ENCODE measurements at regions of chr13 and their contacts with region 1.

Region 1: DNA sequence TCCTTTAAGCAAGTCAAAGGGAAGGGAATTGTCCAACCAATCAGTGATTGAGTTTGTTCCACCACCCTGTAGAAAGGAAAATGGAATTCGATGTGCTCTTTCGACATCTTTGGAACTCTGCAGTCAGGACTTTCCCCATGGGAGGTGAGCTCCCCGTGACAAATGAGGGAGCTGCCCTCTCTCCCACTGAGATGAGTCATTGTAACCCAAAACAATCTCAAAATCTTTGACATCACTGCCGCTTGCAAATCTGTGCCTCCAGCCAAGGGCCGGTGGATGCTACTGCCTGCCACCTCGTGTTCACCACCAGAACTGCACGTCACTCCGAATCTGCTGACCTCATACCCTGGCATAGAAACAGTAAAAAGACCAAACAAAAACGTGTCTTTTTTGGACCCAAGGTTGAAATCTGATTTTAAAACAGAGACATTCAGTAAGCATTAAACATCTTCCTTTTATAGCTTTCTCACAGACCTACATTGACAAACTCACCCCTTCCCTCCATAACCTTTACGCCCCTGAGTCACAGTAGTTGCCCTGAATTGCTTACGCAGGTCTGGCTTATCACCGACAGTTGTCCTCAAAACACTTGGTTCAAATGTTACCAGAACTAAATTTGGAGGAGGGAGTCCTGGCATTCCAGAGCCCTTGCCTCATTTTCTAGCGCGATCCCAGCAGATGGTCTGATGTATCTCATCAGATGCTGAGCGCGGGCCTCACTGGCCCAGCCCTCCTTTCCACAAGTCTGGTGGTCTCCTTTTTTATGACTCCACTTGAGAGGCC is 105.2 kb downstream of the COL4A2 start:
- DNase-seq: peak; percentile 91 to 93
- ATAC-seq: peak; percentile 90
- H3K4me3 ChIP-seq: no peak overlapping the region
- H3K27ac ChIP-seq: peak overlapping the region; percentile 40 to 92
- H3K4me1 ChIP-seq: peaks cover 4 to 13% of the 10 kb centered on the region in 2 donors
- H3K27me3 ChIP-seq: no peaks in the 10 kb centered on the region

Region 2: GRCh38 chr13:110244071-110244830 is 168.1 kb before region 1 on chr13:
- intact Hi-C with region 1: loop called (anchors 5 to 10 kb)
- DNase-seq: no peak
- ATAC-seq: peak; percentile 34
- H3K4me3 ChIP-seq: no peak overlapping the region
- H3K27ac ChIP-seq: peak overlapping the region; percentile 38 to 98
- H3K4me1 ChIP-seq: peaks cover 3 to 14% of the 10 kb centered on the region in 2 donors
- H3K27me3 ChIP-seq: no peaks in the 10 kb centered on the region

Region 3: GRCh38 chr13:110306960-110307746 is 105.2 kb before region 1 on chr13 and contains the starts of genes COL4A1 and COL4A2:
- intact Hi-C with region 1: loop called (anchors 2 to 10 kb)
- DNase-seq: peak; percentile 80 to 94
- ATAC-seq: peak; percentile 85
- H3K4me3 ChIP-seq: peak within 1 kb of the TSS; percentile 55 to 89
- H3K27ac ChIP-seq: peak within 1 kb of the TSS; percentile 80 to 91
- H3K4me1 ChIP-seq: peaks cover 6 to 11% of the 10 kb centered on the region in 2 donors
- H3K27me3 ChIP-seq: no peaks in the 10 kb centered on the region
- total RNA-seq, gene COL4A1: 564 to 910 TPM
- total RNA-seq, gene COL4A2: 693 to 1,110 TPM

Region 4: DNA sequence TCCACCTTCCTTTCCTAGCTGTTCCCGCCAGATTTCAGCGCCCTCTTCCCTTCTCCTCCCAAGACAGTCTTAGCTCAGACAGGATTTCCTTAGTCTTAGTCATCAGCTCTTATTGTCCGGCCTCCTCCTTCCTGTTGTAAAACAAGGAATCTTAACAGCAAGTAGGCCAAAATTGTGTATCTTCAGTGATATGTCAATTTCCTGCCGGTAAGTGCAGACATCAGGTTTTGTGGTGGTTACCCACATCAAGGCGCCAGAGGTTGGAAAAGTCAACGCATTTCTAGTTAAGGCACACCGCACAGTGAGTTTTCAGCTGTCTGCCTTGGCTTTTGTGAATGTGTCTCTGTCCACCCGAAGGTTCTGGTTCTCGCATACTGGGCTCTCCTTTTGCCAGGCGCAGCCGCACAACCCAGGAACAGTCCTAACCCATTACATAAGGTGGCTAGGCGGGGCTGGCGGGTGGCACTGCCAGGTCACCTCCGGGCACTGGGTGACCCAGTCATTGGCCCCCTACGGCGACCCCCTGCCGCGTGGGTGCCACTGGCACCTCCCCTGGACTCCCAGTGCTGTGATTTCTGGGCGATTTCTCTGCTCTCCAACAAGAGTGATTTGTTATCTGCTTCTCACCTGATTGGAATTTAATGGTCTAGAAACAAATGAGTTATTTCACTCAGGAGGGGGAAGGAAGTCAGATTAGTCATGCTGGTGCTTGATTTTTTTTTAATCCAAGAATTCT is 92.4 kb before region 1 on chr13:
- intact Hi-C with region 1: loop called (anchors 5 to 10 kb)
- DNase-seq: peak; percentile 63 to 88
- ATAC-seq: peak; percentile 44
- H3K4me3 ChIP-seq: no peak overlapping the region
- H3K27ac ChIP-seq: peak overlapping the region in 1 of 2 donors; percentile 96
- H3K4me1 ChIP-seq: peaks cover 7 to 8% of the 10 kb centered on the region in 2 donors
- H3K27me3 ChIP-seq: no peaks in the 10 kb centered on the region

Region 5: GRCh38 chr13:110327036-110327760 is 85.1 kb before region 1 on chr13:
- intact Hi-C with region 1: loop called in 1 of 2 experiments (anchors 5 kb)
- DNase-seq: no peak
- ATAC-seq: no peak
- H3K4me3 ChIP-seq: no peak overlapping the region
- H3K27ac ChIP-seq: peak overlapping the region; percentile 54 to 68
- H3K4me1 ChIP-seq: peaks cover 7 to 15% of the 10 kb centered on the region in 2 donors
- H3K27me3 ChIP-seq: no peaks in the 10 kb centered on the region

Region 6: DNA sequence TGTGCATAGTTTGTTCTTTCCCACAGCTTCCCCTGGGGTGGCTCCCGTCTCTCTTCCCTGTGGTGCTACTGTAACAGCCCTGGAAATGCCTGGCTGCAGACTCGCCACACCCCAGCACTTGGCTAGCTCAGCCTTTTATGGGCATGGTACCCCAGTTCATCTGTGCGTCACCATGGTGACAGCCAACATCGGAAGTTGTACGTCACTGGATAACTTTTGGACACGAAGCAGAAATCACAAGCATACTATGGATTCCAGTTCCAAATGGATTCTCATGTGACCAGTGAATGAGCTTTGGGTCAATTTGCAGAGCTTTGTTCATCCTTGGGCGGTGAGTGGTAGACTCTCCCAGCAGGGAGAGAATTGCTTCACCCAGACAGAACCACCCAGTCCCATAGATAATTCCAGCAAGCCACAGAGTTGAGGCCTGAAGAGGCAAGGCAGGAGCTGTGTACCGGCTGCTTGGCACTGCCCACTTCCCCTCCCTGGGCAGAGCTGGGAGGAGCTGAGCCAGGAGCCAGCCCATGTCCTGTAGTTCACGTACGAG is 50.9 kb before region 1 on chr13:
- intact Hi-C with region 1: loop called (anchors 5 to 10 kb)
- DNase-seq: peak; percentile 88 to 93
- ATAC-seq: peak; percentile 85
- H3K4me3 ChIP-seq: no peak overlapping the region
- H3K27ac ChIP-seq: peak overlapping the region; percentile 62 to 89
- H3K4me1 ChIP-seq: peaks cover 0 to 10% of the 10 kb centered on the region in 2 donors
- H3K27me3 ChIP-seq: no peaks in the 10 kb centered on the region

Region 7: DNA sequence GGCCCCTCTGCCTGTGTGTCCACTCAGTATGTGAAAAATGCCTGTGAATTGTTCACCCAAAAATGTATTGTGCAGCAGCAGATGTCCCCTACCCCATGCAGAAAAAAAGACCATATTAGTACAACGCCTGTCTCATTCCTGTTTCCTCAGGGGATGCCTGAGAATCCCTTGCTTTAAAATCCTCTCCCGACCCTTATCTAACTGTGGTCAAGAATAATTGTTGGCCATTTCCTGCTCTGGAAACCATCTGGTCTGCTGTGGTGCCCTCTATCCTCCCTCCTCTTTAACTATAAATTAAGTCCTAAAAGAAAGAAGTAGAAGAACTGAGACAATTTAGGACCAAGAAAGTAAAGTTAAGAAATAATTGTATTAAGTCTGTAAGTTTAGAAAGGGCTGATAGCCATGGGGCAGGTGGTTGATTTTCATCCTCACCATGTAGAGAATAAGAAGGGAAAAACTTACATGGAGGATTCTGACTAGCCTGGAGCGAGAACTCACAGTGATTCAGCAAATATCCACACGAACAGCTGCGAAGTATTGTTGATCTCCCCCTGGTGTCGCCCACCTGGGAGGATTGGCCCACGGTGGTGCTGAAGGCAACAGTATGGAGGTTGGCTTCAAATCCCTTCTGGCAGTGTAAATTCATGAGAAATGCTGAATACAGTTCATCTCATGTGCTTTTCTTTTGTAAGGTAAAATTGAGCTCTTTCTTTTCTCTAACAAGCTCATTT is 19.6 kb before region 1 on chr13:
- intact Hi-C with region 1: loop called in 1 of 2 experiments (anchors 2 kb)
- DNase-seq: no peak
- ATAC-seq: no peak
- H3K4me3 ChIP-seq: no peak overlapping the region
- H3K27ac ChIP-seq: peak overlapping the region; percentile 8 to 77
- H3K4me1 ChIP-seq: peaks cover 14 to 15% of the 10 kb centered on the region in 2 donors
- H3K27me3 ChIP-seq: no peaks in the 10 kb centered on the region